ENCODE measurements at regions of chr10 and their contacts with region 1.

Region 1: DNA sequence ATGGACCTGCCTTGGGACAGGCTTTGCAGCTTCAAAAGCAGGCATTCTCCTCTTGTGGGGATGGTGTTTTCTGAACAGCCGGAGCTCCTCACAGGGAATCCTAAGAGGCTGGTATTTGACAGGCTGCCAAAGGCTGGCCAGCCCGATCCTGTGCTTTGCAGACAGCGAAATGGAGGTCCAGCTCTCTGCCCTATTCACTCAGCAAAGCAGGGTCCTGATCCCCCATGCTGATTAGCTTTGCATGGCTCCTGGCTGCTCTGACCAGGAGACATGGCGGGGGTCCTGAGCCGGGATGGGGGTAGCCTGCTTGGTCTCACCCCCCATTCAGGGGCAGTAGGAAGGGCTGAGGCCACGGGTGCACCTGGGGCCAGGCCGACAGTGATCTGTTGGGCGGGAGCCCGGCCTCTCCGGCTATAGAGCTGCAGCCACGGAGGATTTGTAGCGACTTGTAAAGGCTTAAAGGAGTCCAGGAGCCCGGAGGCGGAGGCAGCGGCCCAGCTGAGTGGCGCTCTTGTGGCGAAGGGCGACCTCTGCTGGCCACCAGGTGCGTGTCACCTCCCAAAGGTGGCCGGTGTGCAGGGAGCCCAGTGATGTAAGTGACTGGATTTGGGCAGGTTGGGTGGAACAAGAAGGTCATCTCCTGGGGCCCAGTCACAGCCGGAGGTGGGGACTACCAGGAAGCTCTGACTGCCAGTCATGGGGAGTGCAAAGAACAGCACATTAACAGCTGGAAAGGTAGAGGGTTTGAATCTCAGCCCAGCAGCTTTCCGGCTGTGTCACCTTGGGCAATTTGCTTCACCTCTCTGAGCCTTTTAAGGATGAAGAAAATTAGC is 126.5 kb downstream of the ZMIZ1 start:
- DNase-seq: peak; percentile 75 to 91 (median 86)
- H3K4me3 ChIP-seq: peak overlapping the region in 35 of 59 donors; percentile 4 to 53 (median 34)
- H3K27ac ChIP-seq: peak overlapping the region in 43 of 59 donors; percentile 2 to 81 (median 54)
- H3K27me3 ChIP-seq: no peaks in the 10 kb centered on the region
- CTCF ChIP-seq: peak; percentile 92 to 100 (median 98)

Region 2: DNA sequence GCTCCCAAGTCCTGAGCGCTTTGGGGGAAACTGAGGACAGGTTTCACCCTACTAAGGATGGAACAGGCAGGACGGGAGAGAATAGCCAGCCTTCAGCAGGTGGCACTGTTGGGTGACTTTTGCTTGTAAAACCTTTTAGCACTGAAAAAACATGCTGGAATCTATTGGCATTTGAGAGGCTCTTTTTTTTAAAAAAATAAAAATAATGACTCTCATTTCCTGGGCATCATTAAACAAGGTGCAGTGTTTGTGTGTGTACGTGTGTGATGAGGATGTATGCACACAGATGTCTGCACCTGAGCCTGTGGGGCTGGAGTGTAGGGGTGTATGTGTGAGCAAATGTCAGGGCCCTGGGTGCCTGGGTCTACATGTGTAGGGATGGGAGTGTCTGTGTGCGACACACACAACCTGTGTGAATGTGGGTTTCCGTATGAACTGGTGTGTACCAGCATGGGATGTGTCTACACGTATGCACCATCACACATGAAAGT is 983.7 kb before region 1 on chr10:
- intact Hi-C with region 1: loop called (anchors 2 to 5 kb)
- DNase-seq: peak in 9 of 10 donors; percentile 25 to 84 (median 67)
- H3K4me3 ChIP-seq: no peak overlapping the region
- H3K27ac ChIP-seq: peak overlapping the region in 10 of 59 donors; percentile 6 to 51 (median 28)
- H3K27me3 ChIP-seq: no peaks in the 10 kb centered on the region
- CTCF ChIP-seq: peak in 55 of 56 donors; percentile 38 to 85 (median 70)

Region 3: GRCh38 chr10:78579995-78580394 is 615.3 kb before region 1 on chr10:
- intact Hi-C with region 1: loop called in 1 of 2 experiments (anchors 10 kb)
- DNase-seq: peak; percentile 82 to 94 (median 87)
- H3K4me3 ChIP-seq: no peak overlapping the region
- H3K27ac ChIP-seq: peak overlapping the region in 53 of 59 donors; percentile 13 to 88 (median 67)
- H3K27me3 ChIP-seq: no peaks in the 10 kb centered on the region
- CTCF ChIP-seq: peak in 13 of 56 donors; percentile 8 to 50 (median 14)

Region 4: GRCh38 chr10:78756604-78757349 is 438.5 kb before region 1 on chr10:
- intact Hi-C with region 1: loop called (anchors 10 kb)
- DNase-seq: peak in 9 of 10 donors; percentile 45 to 91 (median 74)
- H3K4me3 ChIP-seq: no peak overlapping the region
- H3K27ac ChIP-seq: peak overlapping the region in 44 of 59 donors; percentile 2 to 76 (median 56)
- H3K27me3 ChIP-seq: no peaks in the 10 kb centered on the region
- CTCF ChIP-seq: peak in 8 of 56 donors; percentile 6 to 39 (median 18)

Region 5: DNA sequence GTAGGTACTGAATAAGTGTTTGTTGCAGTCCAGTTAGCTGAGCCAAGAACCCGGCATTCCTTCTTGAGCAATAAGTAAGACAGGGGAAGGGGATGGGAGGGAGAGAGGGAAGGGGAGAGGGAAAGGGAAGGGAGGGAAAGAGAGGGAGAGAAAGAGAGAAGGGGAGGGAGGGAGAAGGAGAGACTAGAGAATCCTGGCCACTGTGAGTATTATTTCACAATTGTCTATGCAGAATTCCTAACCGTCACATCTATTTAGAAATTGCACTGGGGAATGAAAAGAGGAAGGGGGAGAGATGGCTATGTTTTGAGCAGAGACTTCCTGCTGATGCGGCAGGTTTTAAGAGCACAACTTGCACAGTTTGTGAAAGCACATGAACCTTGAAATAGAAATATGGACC is 377.9 kb before region 1 on chr10:
- intact Hi-C with region 1: no loop called
- DNase-seq: no peak
- H3K4me3 ChIP-seq: no peak overlapping the region
- H3K27ac ChIP-seq: no peak overlapping the region
- H3K27me3 ChIP-seq: no peaks in the 10 kb centered on the region
- CTCF ChIP-seq: no peak

Region 6: DNA sequence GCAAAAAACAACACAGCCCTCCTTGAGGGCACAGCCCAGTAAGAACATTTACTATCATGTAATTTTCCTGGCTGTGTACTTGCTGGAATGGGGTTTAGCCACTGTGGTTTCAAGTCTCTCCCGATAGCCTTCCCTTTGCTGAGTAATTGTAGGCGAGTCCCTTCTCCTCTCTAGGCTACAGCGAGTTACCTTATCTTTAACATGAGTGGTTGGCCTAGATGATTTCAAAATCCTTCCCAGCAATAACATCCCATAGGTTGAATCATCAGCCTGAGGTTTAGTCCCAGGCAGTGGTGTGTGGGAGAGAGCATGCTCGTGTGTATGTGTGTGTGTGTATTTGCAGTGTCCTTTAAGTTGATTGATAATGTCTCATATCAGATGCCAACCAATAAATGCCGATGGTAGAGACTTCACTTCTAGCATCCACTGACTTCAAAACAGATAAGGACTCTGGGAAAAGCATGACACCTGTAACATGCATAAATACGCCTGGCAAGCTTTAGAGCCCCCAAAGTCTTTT is 269.4 kb before region 1 on chr10:
- intact Hi-C with region 1: loop called in 1 of 2 experiments (anchors 5 kb)
- DNase-seq: no peak
- H3K4me3 ChIP-seq: no peak overlapping the region
- H3K27ac ChIP-seq: no peak overlapping the region
- H3K27me3 ChIP-seq: no peaks in the 10 kb centered on the region
- CTCF ChIP-seq: no peak

Region 7: DNA sequence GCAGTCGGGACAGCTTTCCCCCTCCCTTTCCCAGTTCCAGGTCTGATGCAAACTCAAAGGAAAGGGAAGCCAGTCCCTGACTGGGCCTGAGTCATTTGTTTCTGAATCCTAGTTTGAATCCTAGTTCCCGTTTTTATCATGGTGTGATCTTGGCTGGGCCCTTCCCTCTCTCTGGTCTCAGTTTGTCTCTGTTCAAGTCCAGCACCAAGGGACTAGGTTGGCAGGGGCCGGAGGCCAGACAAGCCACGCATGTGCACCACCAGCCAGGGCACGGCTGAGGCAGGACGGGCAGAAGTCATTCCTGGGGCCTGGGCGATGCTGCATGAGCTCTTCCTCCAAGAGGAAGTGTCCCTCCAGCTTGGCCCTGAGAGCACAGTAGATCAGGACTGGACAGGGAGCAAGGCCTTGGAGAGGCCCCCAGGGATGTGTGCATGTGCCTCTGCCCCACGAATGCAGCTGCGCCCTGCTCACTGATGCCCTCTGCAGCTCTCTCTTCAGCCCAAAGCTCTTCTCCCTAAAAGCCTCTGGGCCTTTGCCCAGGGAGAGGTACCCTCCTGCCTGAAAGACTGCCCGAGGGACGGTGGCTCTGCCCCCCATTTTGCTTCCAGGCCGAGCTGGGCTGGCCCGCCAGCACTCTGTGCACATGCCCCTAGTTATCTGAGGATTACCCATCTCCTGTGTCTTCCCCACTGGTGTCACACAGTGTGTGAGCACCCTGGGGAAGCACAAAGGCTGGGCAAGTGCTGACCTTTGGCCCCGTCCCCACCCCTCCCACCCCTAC is 39.8 kb before region 1 on chr10:
- intact Hi-C with region 1: loop called (anchors 5 kb)
- DNase-seq: no peak
- H3K4me3 ChIP-seq: no peak overlapping the region
- H3K27ac ChIP-seq: peak overlapping the region in 42 of 59 donors; percentile 13 to 89 (median 50)
- H3K27me3 ChIP-seq: no peaks in the 10 kb centered on the region
- CTCF ChIP-seq: peak in 31 of 56 donors; percentile 7 to 49 (median 25)

Region 8: GRCh38 chr10:79260786-79261740 is 65.8 kb after region 1 on chr10:
- intact Hi-C with region 1: no loop called
- DNase-seq: peak in 8 of 10 donors; percentile 64 to 76 (median 68)
- H3K4me3 ChIP-seq: peak overlapping the region in 21 of 59 donors; percentile 1 to 35 (median 14)
- H3K27ac ChIP-seq: peak overlapping the region; percentile 30 to 94 (median 88)
- H3K27me3 ChIP-seq: no peaks in the 10 kb centered on the region
- CTCF ChIP-seq: no peak

Measured in dorsolateral prefrontal cortex (tissue), 120 donors.